Adrenal gland (tissue), 19 donors: ENCODE measurements at regions of chr7 and their contacts with region 1.

Region 1: DNA sequence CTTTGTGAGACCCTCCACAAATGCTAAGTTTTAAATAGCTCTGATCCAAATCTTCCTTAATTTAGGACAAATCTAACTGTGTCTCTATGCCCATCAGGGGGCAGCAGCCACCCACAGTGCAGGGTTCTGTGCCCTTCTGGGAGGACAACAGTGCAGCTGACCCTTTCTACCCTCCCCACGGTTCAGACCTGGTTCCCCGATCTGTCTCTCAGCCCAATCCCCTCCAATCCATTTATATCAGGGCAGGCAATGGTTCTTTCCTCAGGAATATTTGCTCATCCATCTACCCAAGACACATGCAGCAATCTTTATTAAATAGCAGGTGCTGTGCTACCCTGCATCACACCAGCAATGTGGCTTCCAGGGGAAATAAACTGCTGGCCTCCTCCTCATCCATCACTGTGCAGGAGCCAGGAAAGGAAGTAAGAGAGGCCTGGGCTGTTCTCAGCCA is 4.0 kb upstream of the RBM28 start:
- DNase-seq: peak; percentile 48 to 79 (median 60)
- H3K4me3 ChIP-seq: no peak overlapping the region
- H3K27ac ChIP-seq: no peak overlapping the region
- H3K4me1 ChIP-seq: peaks cover 2 to 18% of the 10 kb centered on the region in 2 donors
- H3K27me3 ChIP-seq: peaks cover 20% of the 10 kb centered on the region
- CTCF ChIP-seq: peak; percentile 55 to 83 (median 78)
- POLR2A ChIP-seq: no peak

Region 2: GRCh38 chr7:128387216-128388144 is 39.8 kb after region 1 on chr7:
- intact Hi-C with region 1: loop called (anchors 2 to 5 kb)
- DNase-seq: peak; percentile 75 to 90 (median 81)
- H3K4me3 ChIP-seq: no peak overlapping the region
- H3K27ac ChIP-seq: no peak overlapping the region
- H3K4me1 ChIP-seq: no peaks in the 10 kb centered on the region
- H3K27me3 ChIP-seq: no peaks in the 10 kb centered on the region
- CTCF ChIP-seq: peak; percentile 77 to 87 (median 82)
- POLR2A ChIP-seq: no peak